Posterior cingulate gyrus (tissue), 11 donors: ENCODE measurements at regions of chr17 and their contacts with region 1.

Region 1: DNA sequence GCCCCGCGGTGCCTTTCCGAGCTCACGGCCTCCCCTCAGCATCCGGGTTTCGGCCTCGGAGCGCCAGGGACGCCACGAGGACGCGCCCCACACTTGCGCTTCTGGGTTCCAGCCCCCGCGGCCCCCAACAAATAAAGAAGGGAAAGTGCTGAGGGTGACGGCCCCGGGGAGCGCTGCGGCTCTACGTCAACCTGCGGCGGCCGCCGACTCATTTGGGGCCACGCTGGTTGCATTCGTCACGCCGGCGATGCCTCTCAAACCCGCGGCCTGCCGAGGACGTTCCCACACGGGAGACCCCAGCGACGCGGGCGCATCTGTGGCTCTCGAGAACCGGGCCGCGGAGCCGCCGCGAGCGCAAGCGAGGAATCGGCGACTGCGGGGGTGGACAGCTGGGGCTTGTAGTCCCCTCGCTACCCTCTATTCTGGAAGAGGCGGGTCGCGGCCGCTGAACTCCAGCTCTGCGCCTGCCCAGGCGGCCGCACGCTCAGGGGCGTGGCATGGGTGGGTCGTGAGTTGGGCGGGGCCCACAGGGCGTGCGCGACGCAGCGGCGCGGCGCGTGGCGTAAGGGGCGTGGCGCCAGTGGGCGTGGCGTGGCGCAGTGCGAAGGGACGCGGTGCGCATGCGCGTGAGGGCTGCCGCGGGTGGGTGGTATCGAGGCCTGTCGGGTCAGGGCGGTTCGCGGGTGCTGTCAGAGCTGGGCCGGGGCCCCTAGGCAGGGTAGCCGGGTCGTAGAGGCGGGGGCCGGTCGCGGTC is at the start of gene AMZ2:
- DNase-seq: peak; percentile 90 to 99 (median 94)

Region 2: DNA sequence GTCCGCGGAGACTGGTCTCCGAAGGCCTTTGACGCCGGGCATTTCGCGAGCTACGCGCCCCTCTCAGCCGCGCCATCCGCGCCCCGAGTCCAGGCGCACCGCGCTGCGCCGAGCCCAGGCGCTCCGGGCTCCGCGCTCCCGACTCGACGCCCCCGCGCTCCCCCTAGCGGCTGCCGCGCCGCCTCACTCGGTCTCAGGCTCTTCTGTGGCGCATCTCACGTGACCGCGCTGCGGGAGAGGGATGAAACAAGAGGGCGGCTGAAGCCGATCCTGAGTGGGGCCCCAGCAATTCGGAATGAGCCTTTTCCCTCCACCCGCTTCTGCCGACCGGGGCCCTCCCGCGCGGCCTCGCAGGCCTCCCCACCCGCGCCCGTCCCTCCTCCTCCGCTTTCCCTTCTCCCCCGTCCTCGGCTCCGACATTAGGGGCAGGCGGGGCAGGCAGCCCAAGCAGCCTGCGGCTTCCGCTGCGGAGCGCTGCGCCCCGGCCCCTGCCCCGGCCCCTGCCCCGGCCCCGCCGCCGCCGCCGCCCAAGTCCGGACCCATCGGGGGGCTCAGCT is 42.3 kb before region 1 on chr17:
- intact Hi-C with region 1: loop called (anchors 1 kb)
- DNase-seq: peak; percentile 91 to 99 (median 95)